ENCODE measurements at regions of chr17 and their contacts with region 1.

Region 1: GRCh38 chr17:76506408-76507349 is 5.5 kb upstream of the RHBDF2 start:
- DNase-seq: no peak
- H3K4me3 ChIP-seq: no peak overlapping the region
- H3K27ac ChIP-seq: no peak overlapping the region
- H3K4me1 ChIP-seq: peaks cover 12 to 24% (median 14%) of the 10 kb centered on the region in 4 donors
- H3K27me3 ChIP-seq: peaks cover 0 to 20% (median 0%) of the 10 kb centered on the region in 4 donors
- CTCF ChIP-seq: peak in 2 of 3 experiments; percentile 95 to 96
- EP300 ChIP-seq: no peak
- POLR2A ChIP-seq: no peak

Region 2: GRCh38 chr17:76408052-76408849 is 98.4 kb before region 1 on chr17:
- intact Hi-C with region 1: loop called (anchors 2 kb)
- DNase-seq: no peak
- H3K4me3 ChIP-seq: no peak overlapping the region
- H3K27ac ChIP-seq: no peak overlapping the region
- H3K4me1 ChIP-seq: peaks cover 24 to 38% (median 31%) of the 10 kb centered on the region in 4 donors
- H3K27me3 ChIP-seq: no peaks in the 10 kb centered on the region
- CTCF ChIP-seq: peak; percentile 60 to 74 (median 65)
- EP300 ChIP-seq: no peak
- POLR2A ChIP-seq: no peak

Region 3: DNA sequence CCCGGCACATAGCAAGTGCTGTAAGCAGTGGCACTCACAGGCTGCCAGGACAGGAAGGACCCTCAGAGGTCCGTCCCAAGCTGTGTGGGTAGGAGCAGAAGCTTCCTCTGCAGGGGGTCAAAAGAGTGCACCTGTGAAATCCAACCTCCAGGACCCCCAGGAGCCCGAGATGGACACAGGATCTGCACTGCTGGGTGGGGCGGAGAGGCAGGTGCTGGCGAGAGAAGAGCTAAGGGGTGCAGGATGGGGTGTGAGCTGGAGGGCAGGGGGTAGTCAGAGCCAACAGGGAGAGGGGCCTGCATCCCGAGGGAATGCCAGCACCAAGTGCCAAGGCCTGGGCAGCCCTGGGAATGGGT is 39.9 kb before region 1 on chr17:
- intact Hi-C with region 1: loop called (anchors 1 kb)
- DNase-seq: no peak
- H3K4me3 ChIP-seq: no peak overlapping the region
- H3K27ac ChIP-seq: no peak overlapping the region
- H3K4me1 ChIP-seq: peaks cover 4 to 7% (median 5%) of the 10 kb centered on the region in 4 donors
- H3K27me3 ChIP-seq: no peaks in the 10 kb centered on the region
- CTCF ChIP-seq: no peak
- EP300 ChIP-seq: no peak
- POLR2A ChIP-seq: no peak

Region 4: DNA sequence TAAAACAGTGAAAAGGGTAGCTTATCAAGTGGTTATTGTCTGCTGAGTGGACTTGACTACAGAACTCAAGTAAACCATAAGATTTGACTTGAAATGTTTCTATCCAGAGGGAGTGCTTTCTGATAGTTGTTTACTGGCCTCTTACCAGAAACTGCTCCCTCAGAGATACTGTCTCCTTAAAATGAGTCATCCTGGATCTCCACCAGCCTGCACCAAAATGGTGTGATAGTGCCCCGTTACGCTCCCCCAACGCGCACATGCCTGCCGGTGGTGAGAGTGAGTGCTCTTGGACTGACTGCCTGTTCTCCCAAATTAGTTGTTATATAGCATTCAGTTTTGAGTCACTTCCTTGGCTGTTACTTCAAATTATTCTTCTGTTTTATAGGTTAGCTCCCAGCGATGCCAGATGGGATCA is 56.1 kb after region 1 on chr17:
- intact Hi-C with region 1: no loop called
- DNase-seq: no peak
- H3K4me3 ChIP-seq: no peak overlapping the region
- H3K27ac ChIP-seq: peak overlapping the region in 3 of 4 donors; percentile 8 to 55 (median 54)
- H3K4me1 ChIP-seq: peaks cover 41 to 55% (median 50%) of the 10 kb centered on the region in 4 donors
- H3K27me3 ChIP-seq: no peaks in the 10 kb centered on the region
- CTCF ChIP-seq: no peak
- EP300 ChIP-seq: no peak
- POLR2A ChIP-seq: no peak